ENCODE measurements at regions of chr18 and their contacts with region 1.

Region 1: DNA sequence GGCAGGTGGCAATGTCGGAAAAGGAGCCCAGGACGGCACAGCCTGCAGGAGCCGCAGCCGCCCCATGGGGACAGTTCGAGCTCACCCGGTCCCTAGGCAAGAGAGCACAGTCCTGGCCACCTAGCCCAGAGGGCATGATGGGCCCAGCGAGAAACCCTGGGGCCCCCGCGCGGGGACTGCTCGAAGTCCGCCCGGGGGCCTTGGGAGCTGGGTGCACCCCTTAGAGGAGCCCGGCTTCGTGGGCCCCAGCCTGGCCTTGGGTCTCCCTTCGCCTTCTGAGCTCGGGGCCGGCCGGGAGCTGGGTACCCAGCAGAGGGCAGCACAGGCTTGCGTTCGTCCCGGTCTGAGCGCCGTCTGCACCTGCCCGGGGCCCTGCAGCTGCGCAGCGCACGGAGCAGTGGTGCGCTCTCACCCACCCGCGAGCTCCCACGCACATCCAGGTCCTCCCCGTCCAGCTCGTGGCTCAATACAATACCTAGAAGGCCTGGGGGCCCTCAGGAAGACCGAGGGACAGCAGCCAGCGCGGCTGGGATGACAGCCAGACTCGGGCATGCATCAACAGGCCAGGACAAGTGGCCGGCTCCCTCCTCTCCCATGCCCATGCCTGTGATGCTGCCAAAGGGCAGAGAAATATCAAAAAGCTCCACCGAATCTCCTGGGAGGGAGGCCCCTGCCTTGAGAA is 96.2 kb upstream of the ZNF532 start:
- H3K4me3 ChIP-seq: peak overlapping the region; percentile 22
- H3K27ac ChIP-seq: no peak overlapping the region
- H3K4me1 ChIP-seq: peaks cover 2% of the 10 kb centered on the region; the same call in 1 of the 2 replicates
- CTCF ChIP-seq: peak; percentile 96

Region 2: GRCh38 chr18:58541789-58542425 is 226.5 kb before region 1 on chr18:
- CTCF ChIA-PET with region 1: interaction called, 28 read pairs
- POLR2A ChIA-PET with region 1: interaction called, 3 read pairs
- H3K4me3 ChIP-seq: no peak overlapping the region
- H3K27ac ChIP-seq: no peak overlapping the region
- H3K4me1 ChIP-seq: peaks cover 5% of the 10 kb centered on the region
- CTCF ChIP-seq: no peak

Region 3: GRCh38 chr18:58671111-58671631 is 97.3 kb before region 1 on chr18 and contains the start of gene MALT1:
- CTCF ChIA-PET with region 1: interaction called, 18 read pairs
- POLR2A ChIA-PET with region 1: interaction called, 13 read pairs
- H3K4me3 ChIP-seq: peak within 1 kb of the TSS; percentile 71
- H3K27ac ChIP-seq: peak within 1 kb of the TSS; percentile 98
- H3K4me1 ChIP-seq: peaks cover 35% of the 10 kb centered on the region
- CTCF ChIP-seq: no peak

Region 4: GRCh38 chr18:59063300-59063906 is 295.0 kb after region 1 on chr18:
- CTCF ChIA-PET with region 1: interaction called, 155 read pairs
- POLR2A ChIA-PET with region 1: no interaction called
- H3K4me3 ChIP-seq: no peak overlapping the region
- H3K27ac ChIP-seq: no peak overlapping the region
- H3K4me1 ChIP-seq: peaks cover 12% of the 10 kb centered on the region
- CTCF ChIP-seq: no peak

Region 5: DNA sequence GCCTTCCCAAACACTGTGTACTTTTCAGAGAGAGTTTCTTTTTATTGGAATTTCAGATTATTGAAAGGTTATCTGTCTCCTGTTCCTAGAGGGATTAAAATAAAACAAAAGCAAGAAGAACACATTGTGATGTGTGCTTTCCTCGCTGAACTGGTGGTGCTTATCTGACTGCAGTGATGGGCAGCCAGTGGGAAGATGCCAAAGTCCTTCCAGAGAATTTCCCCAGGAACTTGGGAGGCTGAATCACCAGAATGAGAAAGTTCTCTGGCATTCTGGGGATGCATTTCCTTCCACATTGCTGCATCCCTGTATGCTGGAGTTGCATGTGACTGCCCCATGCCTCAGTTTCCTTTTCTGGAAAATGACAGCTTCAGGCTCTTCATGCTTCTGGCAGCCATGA is 317.4 kb after region 1 on chr18:
- CTCF ChIA-PET with region 1: interaction called, 13 read pairs
- POLR2A ChIA-PET with region 1: no interaction called
- H3K4me3 ChIP-seq: no peak overlapping the region
- H3K27ac ChIP-seq: no peak overlapping the region
- H3K4me1 ChIP-seq: peaks cover 2% of the 10 kb centered on the region; the same call in 1 of the 2 replicates
- CTCF ChIP-seq: no peak

Measured in HEK293 (cell line).